ENCODE measurements at regions of chr1 and their contacts with region 1.

Region 1: DNA sequence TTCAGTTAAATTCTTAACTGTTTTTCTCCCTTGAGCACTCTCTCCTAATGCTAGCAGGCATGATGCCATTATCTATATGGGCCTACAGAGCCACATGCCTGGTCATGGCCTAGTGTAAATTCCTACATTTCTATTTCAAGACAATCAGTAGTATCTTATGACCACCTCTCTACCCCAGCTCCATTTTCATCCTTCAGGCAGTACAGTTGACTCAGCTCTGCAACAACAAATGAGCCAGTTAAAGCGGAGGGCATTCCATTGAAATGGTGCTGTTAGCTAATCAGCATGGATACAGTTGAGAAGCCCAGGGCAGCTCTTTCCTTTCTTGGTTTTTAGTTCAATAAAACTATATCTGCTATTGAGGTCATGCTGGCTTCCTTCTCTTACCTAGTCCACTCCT is 150.0 kb downstream of the PPP1R12B start:
- DNase-seq: no peak
- ATAC-seq: no peak
- H3K4me3 Mint-ChIP-seq: no peak overlapping the region
- H3K27ac Mint-ChIP-seq: no peak overlapping the region
- H3K4me1 Mint-ChIP-seq: no peaks in the 10 kb centered on the region
- H3K27me3 Mint-ChIP-seq: no peaks in the 10 kb centered on the region
- CTCF ChIP-seq: no peak

Region 2: GRCh38 chr1:202571347-202572339 is 73.1 kb after region 1 on chr1:
- CTCF ChIA-PET with region 1: interaction called, 5 read pairs
- POLR2A ChIA-PET with region 1: no interaction called
- intact Hi-C with region 1: loop called (anchors 10 kb)
- DNase-seq: peak; percentile 53
- ATAC-seq: peak; percentile 73
- H3K4me3 Mint-ChIP-seq: no peak overlapping the region
- H3K27ac Mint-ChIP-seq: no peak overlapping the region
- H3K4me1 Mint-ChIP-seq: peaks cover 3% of the 10 kb centered on the region
- H3K27me3 Mint-ChIP-seq: no peaks in the 10 kb centered on the region
- CTCF ChIP-seq: peak; percentile 91

Measured in activated CD8-positive, alpha-beta T cell treated with anti-CD3 and anti-CD28 coated beads for 36 hours (primary cell).